IMR-90 (cell line): ENCODE measurements at regions of chr1 and their contacts with region 1.

Region 1: GRCh38 chr1:67908250-67908936 is 75.1 kb upstream of the GNG12 start:
- DNase-seq: peak; percentile 7
- ATAC-seq: peak; percentile 44
- H3K4me3 ChIP-seq: no peak overlapping the region
- H3K27ac ChIP-seq: no peak overlapping the region
- H3K4me1 ChIP-seq: no peaks in the 10 kb centered on the region
- H3K27me3 ChIP-seq: no peaks in the 10 kb centered on the region
- CTCF ChIP-seq: no peak
- POLR2A ChIP-seq: no peak
- RAD21 ChIP-seq: no peak

Region 2: GRCh38 chr1:67931198-67931597 is 22.8 kb after region 1 on chr1:
- CTCF ChIA-PET with region 1: no interaction called
- POLR2A ChIA-PET with region 1: interaction called, 10 read pairs
- dilution Hi-C with region 1: no loop called
- in situ Hi-C with region 1: no loop called
- intact Hi-C with region 1: no loop called
- DNase-seq: no peak
- ATAC-seq: no peak
- H3K4me3 ChIP-seq: no peak overlapping the region
- H3K27ac ChIP-seq: no peak overlapping the region
- H3K4me1 ChIP-seq: peaks cover 5% of the 10 kb centered on the region
- H3K27me3 ChIP-seq: no peaks in the 10 kb centered on the region
- CTCF ChIP-seq: no peak
- POLR2A ChIP-seq: no peak
- RAD21 ChIP-seq: no peak